CD4-positive, alpha-beta T cell (primary cell): ENCODE measurements at regions of chr19 and their contacts with region 1.

Region 1: GRCh38 chr19:49869441-49870176 is 2.2 kb upstream of the PNKP start:
- DNase-seq: peak; percentile 78 to 98 (median 86)
- ATAC-seq: peak; percentile 77
- H3K4me3 ChIP-seq: peak overlapping the region; percentile 61
- H3K4me3 Mint-ChIP-seq: peak overlapping the region; percentile 78
- H3K27ac ChIP-seq: peak overlapping the region; percentile 68 to 76
- H3K27ac Mint-ChIP-seq: no peak overlapping the region
- H3K4me1 ChIP-seq: peaks cover 67% of the 10 kb centered on the region
- H3K4me1 Mint-ChIP-seq: peaks cover 35% of the 10 kb centered on the region
- H3K27me3 ChIP-seq: no peaks in the 10 kb centered on the region
- H3K27me3 Mint-ChIP-seq: no peaks in the 10 kb centered on the region
- CTCF ChIP-seq: no peak

Region 2: DNA sequence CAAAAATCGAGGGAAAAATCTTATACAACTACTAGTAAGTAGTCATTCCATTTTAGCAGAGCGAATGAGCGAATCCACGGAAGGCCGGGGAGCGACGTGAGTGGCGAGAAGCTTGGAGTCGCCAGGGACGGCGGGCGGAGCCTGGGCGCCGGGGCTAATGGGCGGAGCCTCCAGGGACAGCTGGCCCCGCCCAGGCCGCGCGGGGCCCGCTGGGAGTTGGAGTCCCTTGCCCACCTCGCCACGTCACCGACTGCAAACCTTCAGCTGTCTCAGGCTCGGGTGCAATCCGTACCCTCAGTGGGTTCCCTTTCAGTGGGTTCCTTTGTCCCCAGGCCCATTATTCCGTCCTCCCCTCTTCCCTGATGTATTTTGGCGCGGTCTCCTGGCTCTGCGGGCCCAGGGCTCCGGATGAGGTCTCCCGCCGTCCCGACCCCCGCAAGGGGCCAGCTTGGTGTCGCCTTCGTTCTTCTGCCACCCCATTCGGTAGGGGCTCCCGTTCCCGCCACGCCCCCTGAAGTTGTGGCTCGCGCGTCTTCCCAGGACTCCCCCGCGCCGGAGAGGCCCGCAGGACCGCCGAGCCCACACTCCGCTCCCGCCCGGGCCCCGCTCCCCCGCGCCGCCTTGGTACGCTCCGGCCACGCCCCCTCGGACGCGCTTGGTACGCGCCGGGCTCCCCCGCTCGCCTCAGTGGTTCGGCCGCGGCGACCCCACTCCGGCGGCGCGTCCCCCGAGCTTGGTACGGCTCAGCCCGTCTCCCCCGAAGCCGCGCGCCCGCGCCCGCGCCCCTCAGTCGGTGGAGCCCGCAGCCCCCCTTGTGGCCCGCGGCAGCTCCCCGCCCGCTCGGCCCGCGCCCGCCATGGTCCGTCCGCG is 18.9 kb before region 1 on chr19 and contains the start of gene PTOV1:
- CTCF ChIA-PET with region 1: interaction called, 4 read pairs
- POLR2A ChIA-PET with region 1: interaction called, 75 read pairs
- intact Hi-C with region 1: loop called (anchors 1 to 2 kb)
- DNase-seq: peak; percentile 77 to 95 (median 84)
- ATAC-seq: peak; percentile 87
- H3K4me3 ChIP-seq: peak within 1 kb of the TSS; percentile 84
- H3K4me3 Mint-ChIP-seq: peak within 1 kb of the TSS; percentile 98
- H3K27ac ChIP-seq: peak within 1 kb of the TSS; percentile 94 to 95
- H3K27ac Mint-ChIP-seq: peak within 1 kb of the TSS; percentile 94
- H3K4me1 ChIP-seq: peaks cover 54% of the 10 kb centered on the region
- H3K4me1 Mint-ChIP-seq: peaks cover 35% of the 10 kb centered on the region
- H3K27me3 ChIP-seq: no peaks in the 10 kb centered on the region
- H3K27me3 Mint-ChIP-seq: no peaks in the 10 kb centered on the region
- CTCF ChIP-seq: no peak
- total RNA-seq, gene PTOV1: 127 to 134 TPM